CD8-positive, alpha-beta T cell (primary cell): ENCODE measurements at regions of chr1 and their contacts with region 1.

Region 1: DNA sequence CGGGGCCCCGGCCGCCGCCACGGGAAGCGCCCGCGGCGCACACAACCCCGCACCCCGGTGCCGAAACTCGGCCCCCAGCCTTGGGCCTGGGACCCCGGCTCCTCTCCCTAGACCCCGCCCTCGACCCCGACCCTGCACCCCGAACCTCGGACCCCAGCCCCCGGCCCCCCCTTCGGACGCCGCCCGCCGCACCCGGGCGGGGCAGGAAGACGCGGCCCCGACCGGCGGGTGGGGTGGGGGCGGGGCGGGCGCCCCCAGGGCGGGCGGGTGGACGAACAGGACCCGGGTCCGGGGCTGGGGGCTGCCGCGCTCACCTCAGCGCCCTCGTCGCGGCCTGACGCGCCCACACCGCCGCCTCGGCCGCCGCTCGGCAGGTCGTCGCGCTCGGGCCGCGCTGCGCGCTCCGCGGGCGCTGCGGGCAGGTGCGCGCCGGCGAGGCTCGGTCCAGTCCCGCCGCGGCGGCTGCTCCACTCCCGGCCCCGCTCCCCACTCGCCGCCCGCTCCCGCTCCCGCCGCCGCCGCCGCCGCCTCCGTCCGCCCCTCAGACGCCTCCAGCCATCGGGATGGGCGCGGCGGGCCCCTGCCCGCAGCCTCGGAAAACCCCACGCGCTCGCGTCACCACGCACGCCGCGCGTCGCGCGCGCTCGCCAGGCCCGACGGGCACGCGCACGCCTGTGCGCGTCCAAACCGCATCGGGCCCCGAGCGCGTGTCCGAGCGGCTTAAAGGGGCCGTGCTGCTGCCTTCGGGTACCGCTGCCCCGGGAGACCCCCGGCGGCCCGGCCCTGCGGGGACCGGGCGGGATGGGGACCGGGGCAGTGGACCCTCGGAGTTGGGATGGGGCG is at the start of gene GNB1:
- DNase-seq: peak; percentile 80 to 97 (median 87)
- ATAC-seq: peak; percentile 62
- H3K4me3 ChIP-seq: peak within 1 kb of the TSS; percentile 68 to 69
- H3K4me3 Mint-ChIP-seq: peak within 1 kb of the TSS; percentile 87
- H3K27ac ChIP-seq: peak within 1 kb of the TSS; percentile 70 to 89
- H3K27ac Mint-ChIP-seq: peak within 1 kb of the TSS; percentile 94
- H3K4me1 ChIP-seq: peaks cover 72% of the 10 kb centered on the region
- H3K4me1 Mint-ChIP-seq: peaks cover 60% of the 10 kb centered on the region
- H3K27me3 ChIP-seq: no peaks in the 10 kb centered on the region
- H3K27me3 Mint-ChIP-seq: no peaks in the 10 kb centered on the region
- CTCF ChIP-seq: no peak
- total RNA-seq, gene GNB1: 145 to 147 TPM

Region 2: GRCh38 chr1:1200851-1201810 is 689.6 kb before region 1 on chr1:
- CTCF ChIA-PET with region 1: no interaction called
- POLR2A ChIA-PET with region 1: no interaction called
- intact Hi-C with region 1: loop called in 1 of 2 experiments (anchors 5 kb)
- DNase-seq: peak; percentile 64 to 96 (median 82)
- ATAC-seq: peak; percentile 88
- H3K4me3 ChIP-seq: peak overlapping the region; percentile 15 to 28
- H3K4me3 Mint-ChIP-seq: peak overlapping the region; percentile 55
- H3K27ac ChIP-seq: peak overlapping the region in 1 of 2 experiments; percentile 54
- H3K27ac Mint-ChIP-seq: no peak overlapping the region
- H3K4me1 ChIP-seq: peaks cover 12% of the 10 kb centered on the region
- H3K4me1 Mint-ChIP-seq: peaks cover 3% of the 10 kb centered on the region
- H3K27me3 ChIP-seq: peaks cover 0 to 10% of the 10 kb centered on the region in 2 experiments
- H3K27me3 Mint-ChIP-seq: no peaks in the 10 kb centered on the region
- CTCF ChIP-seq: no peak

Region 3: DNA sequence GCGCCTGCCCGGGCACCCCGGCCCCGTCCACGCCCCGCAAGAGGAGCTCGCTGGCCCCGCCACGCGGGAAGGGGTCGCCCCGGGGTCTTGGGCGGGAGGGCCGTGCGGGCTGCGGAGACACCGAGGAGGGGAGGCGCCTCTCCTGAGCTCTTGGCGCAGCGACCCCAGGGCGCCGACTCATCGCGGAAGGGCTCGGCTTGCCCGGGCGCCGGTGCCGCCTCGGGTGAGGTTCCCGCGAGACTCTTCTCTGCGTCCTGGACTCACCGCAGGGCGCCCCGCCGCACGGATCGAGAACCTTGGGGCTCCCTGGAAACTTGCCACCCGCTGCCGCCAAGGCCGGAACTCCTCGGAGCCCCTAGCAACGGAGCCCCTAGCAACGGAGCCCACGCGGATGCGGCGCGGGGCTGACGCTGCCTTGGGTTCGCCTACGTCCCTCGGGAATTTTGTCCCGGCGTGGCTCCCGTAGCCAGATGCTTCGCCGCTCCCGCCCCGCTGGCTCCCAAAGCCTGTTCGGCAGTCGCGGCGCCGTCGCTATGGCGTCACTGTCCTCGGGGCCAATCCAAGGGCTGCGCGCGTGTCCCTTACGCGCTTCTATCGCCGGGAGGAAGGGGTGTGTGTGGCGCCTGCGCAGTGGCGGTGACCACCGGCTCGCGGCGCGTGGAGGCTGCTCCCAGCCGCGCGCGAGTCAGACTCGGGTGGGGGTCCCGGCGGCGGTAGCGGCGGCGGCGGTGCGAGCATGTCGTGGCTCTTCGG is 379.0 kb before region 1 on chr1 and contains the start of gene ATAD3A:
- CTCF ChIA-PET with region 1: no interaction called
- POLR2A ChIA-PET with region 1: no interaction called
- intact Hi-C with region 1: loop called in 1 of 2 experiments (anchors 10 kb)
- DNase-seq: peak; percentile 83 to 98 (median 95)
- ATAC-seq: peak; percentile 94
- H3K4me3 ChIP-seq: peak within 1 kb of the TSS; percentile 81 to 99
- H3K4me3 Mint-ChIP-seq: peak within 1 kb of the TSS; percentile 88
- H3K27ac ChIP-seq: peak within 1 kb of the TSS; percentile 90 to 97
- H3K27ac Mint-ChIP-seq: peak within 1 kb of the TSS; percentile 94
- H3K4me1 ChIP-seq: peaks cover 6% of the 10 kb centered on the region
- H3K4me1 Mint-ChIP-seq: peaks cover 11% of the 10 kb centered on the region
- H3K27me3 ChIP-seq: no peaks in the 10 kb centered on the region
- H3K27me3 Mint-ChIP-seq: no peaks in the 10 kb centered on the region
- CTCF ChIP-seq: no peak
- total RNA-seq, gene ATAD3A: 27.0 to 29.6 TPM

Region 4: DNA sequence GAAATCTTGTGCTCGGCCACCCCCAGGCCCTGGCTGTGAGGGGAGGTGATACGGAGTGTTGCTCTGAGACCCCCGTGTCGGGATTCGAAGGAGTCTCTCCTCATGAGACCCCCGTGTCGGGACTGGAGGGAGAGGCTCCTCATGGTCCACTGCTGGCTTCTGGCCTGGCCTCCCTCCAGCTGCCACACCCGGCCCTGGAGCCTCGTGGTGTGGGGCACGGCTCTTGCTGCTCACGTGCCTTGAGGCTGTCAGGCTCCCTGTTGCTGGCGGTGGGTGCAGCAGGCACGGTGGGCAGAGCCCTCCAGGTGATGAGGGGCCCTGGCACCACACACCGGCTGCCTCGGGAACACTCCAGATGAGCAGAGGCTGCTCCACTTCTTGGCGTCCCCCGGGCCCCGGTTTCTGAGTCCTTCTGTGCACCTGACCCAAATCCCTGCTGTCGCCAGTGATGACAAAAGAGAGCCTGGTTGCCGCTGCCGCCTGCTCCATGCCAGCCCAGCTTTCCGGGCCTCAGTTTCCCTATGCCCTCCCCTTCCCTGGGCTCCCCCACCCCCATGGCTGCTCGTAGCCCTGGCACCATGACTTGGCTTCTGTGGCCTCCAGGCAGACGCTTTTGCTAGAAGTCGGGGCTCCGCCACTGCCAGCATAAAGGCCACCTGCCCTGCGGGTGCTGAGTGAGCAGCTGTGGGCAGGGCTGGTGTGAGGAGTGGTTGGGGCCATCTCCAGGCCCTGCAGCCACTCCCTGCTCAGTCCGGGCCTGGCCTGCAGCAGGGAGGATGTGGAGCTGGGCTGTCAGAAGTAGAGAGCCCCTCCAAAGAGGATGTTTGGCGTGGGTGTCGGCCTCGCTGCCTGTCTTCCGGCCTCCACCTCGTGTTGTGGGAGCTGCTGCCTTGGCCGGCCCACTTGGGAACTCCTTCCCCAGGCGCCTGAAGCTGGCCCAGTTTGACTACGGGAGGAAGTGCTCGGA is 362.1 kb before region 1 on chr1:
- CTCF ChIA-PET with region 1: no interaction called
- POLR2A ChIA-PET with region 1: no interaction called
- intact Hi-C with region 1: no loop called
- DNase-seq: no peak
- ATAC-seq: no peak
- H3K4me3 ChIP-seq: no peak overlapping the region
- H3K4me3 Mint-ChIP-seq: no peak overlapping the region
- H3K27ac ChIP-seq: no peak overlapping the region
- H3K27ac Mint-ChIP-seq: no peak overlapping the region
- H3K4me1 ChIP-seq: no peaks in the 10 kb centered on the region
- H3K4me1 Mint-ChIP-seq: no peaks in the 10 kb centered on the region
- H3K27me3 ChIP-seq: no peaks in the 10 kb centered on the region
- H3K27me3 Mint-ChIP-seq: no peaks in the 10 kb centered on the region
- CTCF ChIP-seq: no peak

Region 5: GRCh38 chr1:1777950-1778662 is 112.6 kb before region 1 on chr1 and contains the start of gene NADK:
- CTCF ChIA-PET with region 1: no interaction called
- POLR2A ChIA-PET with region 1: interaction called, 4 read pairs
- intact Hi-C with region 1: loop called (anchors 2 kb)
- DNase-seq: peak; percentile 45 to 88 (median 70)
- ATAC-seq: peak; percentile 54
- H3K4me3 ChIP-seq: peak within 1 kb of the TSS; percentile 60 to 64
- H3K4me3 Mint-ChIP-seq: peak within 1 kb of the TSS; percentile 84
- H3K27ac ChIP-seq: peak within 1 kb of the TSS; percentile 56 to 95
- H3K27ac Mint-ChIP-seq: peak within 1 kb of the TSS; percentile 93
- H3K4me1 ChIP-seq: peaks cover 66% of the 10 kb centered on the region
- H3K4me1 Mint-ChIP-seq: peaks cover 63% of the 10 kb centered on the region
- H3K27me3 ChIP-seq: no peaks in the 10 kb centered on the region
- H3K27me3 Mint-ChIP-seq: no peaks in the 10 kb centered on the region
- CTCF ChIP-seq: no peak
- total RNA-seq, gene NADK: 15.4 to 16.7 TPM

Region 6: GRCh38 chr1:1841575-1841995 is 49.1 kb before region 1 on chr1:
- CTCF ChIA-PET with region 1: interaction called, 3 read pairs
- POLR2A ChIA-PET with region 1: no interaction called
- intact Hi-C with region 1: loop called in 1 of 2 experiments (anchors 5 kb)
- DNase-seq: no peak
- ATAC-seq: no peak
- H3K4me3 ChIP-seq: no peak overlapping the region
- H3K4me3 Mint-ChIP-seq: peak overlapping the region; percentile 59
- H3K27ac ChIP-seq: peak overlapping the region in 1 of 2 experiments; percentile 10
- H3K27ac Mint-ChIP-seq: peak overlapping the region; percentile 71
- H3K4me1 ChIP-seq: peaks cover 24% of the 10 kb centered on the region
- H3K4me1 Mint-ChIP-seq: peaks cover 54% of the 10 kb centered on the region
- H3K27me3 ChIP-seq: no peaks in the 10 kb centered on the region
- H3K27me3 Mint-ChIP-seq: no peaks in the 10 kb centered on the region
- CTCF ChIP-seq: no peak

Region 7: DNA sequence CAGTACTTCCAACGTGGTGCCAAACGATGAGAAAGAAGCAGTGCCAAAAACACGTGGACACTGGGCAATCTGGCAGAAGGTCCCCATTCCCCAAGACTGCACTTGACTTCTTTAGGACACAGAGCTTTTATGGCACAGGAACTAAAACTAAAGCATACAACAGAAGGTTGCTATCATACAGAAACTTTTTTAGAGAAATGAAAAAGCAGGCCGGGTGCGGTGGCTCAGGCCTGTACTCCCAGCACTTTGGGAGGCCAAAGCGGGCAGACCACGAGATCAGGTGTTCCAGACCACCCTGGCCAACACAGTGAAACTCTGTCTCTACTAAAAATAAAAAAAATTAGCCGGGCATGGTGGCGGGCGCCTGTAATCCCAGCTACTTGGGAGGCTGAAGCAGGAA is 42.8 kb before region 1 on chr1:
- CTCF ChIA-PET with region 1: no interaction called
- POLR2A ChIA-PET with region 1: no interaction called
- intact Hi-C with region 1: loop called (anchors 2 to 5 kb)
- DNase-seq: no peak
- ATAC-seq: no peak
- H3K4me3 ChIP-seq: no peak overlapping the region
- H3K4me3 Mint-ChIP-seq: no peak overlapping the region
- H3K27ac ChIP-seq: no peak overlapping the region
- H3K27ac Mint-ChIP-seq: no peak overlapping the region
- H3K4me1 ChIP-seq: peaks cover 23% of the 10 kb centered on the region
- H3K4me1 Mint-ChIP-seq: peaks cover 63% of the 10 kb centered on the region
- H3K27me3 ChIP-seq: no peaks in the 10 kb centered on the region
- H3K27me3 Mint-ChIP-seq: no peaks in the 10 kb centered on the region
- CTCF ChIP-seq: no peak

Region 8: DNA sequence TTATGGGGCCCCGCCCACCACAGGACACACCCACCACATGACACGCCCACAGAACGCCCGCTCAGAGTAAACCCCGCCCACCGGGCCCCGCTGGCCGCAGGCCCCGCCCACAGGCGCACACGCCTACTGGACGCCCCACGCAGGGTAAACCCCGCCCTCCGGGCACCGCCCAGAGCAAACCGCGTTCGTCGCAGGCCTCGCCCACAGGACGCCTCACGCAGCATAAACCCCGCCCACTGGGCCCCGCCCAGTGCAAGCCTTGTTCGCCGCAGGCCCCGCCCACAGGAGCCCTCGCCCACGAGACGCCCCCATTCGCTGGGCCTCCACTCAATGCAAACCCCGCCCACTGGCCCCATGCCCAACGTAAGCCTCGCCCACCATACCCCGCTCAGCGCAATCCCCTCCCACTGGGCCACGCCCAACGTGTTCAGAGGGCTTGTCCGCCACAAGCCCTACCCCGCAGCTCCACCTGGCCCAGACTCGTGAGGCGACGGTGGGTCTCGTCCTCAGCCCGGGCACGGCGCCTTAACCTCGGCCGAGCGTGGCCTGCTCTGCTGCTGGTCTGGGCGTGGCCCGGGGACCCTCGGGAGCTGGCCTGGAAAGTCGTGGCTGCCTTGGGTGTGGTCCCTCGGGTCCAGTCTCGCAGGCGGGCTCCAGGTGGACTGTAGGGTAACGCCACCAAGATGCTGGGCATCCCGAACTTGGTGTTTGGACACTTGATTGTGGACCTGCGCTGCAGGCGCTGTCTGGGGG is 28.8 kb after region 1 on chr1:
- CTCF ChIA-PET with region 1: no interaction called
- POLR2A ChIA-PET with region 1: interaction called, 3 read pairs
- intact Hi-C with region 1: loop called (anchors 1 kb)
- DNase-seq: peak; percentile 97 to 100 (median 99)
- ATAC-seq: peak; percentile 89
- H3K4me3 ChIP-seq: peak overlapping the region; percentile 39 to 74
- H3K4me3 Mint-ChIP-seq: peak overlapping the region; percentile 47
- H3K27ac ChIP-seq: peak overlapping the region in 1 of 2 experiments; percentile 28
- H3K27ac Mint-ChIP-seq: peak overlapping the region; percentile 5
- H3K4me1 ChIP-seq: peaks cover 17% of the 10 kb centered on the region
- H3K4me1 Mint-ChIP-seq: peaks cover 3% of the 10 kb centered on the region
- H3K27me3 ChIP-seq: no peaks in the 10 kb centered on the region
- H3K27me3 Mint-ChIP-seq: no peaks in the 10 kb centered on the region
- CTCF ChIP-seq: no peak